ENCODE measurements at regions of chr9 and their contacts with region 1.

Region 1: DNA sequence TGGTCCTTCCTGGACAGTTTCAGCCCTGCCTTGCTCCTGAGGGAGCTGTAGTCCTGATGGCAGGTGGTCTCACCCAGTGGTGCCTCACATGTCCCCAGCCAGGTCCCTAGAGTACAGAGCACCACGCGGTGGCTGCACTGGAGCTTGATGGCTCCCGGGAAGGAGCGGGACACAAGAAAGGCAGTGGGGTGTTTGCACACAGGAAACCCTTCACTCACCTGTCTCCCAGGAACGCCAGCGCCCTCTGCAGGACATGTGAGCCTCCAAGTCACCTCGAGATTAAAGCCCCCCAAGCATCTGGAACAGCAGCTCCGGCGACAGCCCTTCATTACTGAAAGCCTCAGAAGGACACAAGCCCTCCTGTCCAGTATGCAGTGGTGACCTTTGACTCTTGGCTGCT is 19.9 kb upstream of the TMEM250 start:
- DNase-seq: peak; percentile 94
- ATAC-seq: peak; percentile 64
- H3K4me3 Mint-ChIP-seq: no peak overlapping the region; the same call in 1 of the 2 replicates
- H3K27ac Mint-ChIP-seq: peak overlapping the region; percentile 94; the same call in 1 of the 2 replicates
- H3K4me1 Mint-ChIP-seq: peaks cover 17% of the 10 kb centered on the region
- H3K27me3 Mint-ChIP-seq: peaks cover 10% of the 10 kb centered on the region
- CTCF ChIP-seq: peak; percentile 72

Region 2: GRCh38 chr9:135968083-135968476 is 170.5 kb before region 1 on chr9:
- CTCF ChIA-PET with region 1: interaction called, 28 read pairs
- POLR2A ChIA-PET with region 1: no interaction called
- DNase-seq: no peak
- ATAC-seq: no peak
- H3K4me3 Mint-ChIP-seq: no peak overlapping the region
- H3K27ac Mint-ChIP-seq: 0 out of 2 replicates have a peak overlapping the region, but pooled peaks have one; percentile 37
- H3K4me1 Mint-ChIP-seq: peaks cover 15% of the 10 kb centered on the region
- H3K27me3 Mint-ChIP-seq: no peaks in the 10 kb centered on the region
- CTCF ChIP-seq: no peak

Region 3: GRCh38 chr9:136122425-136123383 is 15.9 kb before region 1 on chr9:
- CTCF ChIA-PET with region 1: interaction called, 17 read pairs
- POLR2A ChIA-PET with region 1: no interaction called
- DNase-seq: peak; percentile 84
- ATAC-seq: peak; percentile 11
- H3K4me3 Mint-ChIP-seq: no peak overlapping the region
- H3K27ac Mint-ChIP-seq: no peak overlapping the region
- H3K4me1 Mint-ChIP-seq: no peaks in the 10 kb centered on the region
- H3K27me3 Mint-ChIP-seq: no peaks in the 10 kb centered on the region
- CTCF ChIP-seq: peak; percentile 83

Region 4: DNA sequence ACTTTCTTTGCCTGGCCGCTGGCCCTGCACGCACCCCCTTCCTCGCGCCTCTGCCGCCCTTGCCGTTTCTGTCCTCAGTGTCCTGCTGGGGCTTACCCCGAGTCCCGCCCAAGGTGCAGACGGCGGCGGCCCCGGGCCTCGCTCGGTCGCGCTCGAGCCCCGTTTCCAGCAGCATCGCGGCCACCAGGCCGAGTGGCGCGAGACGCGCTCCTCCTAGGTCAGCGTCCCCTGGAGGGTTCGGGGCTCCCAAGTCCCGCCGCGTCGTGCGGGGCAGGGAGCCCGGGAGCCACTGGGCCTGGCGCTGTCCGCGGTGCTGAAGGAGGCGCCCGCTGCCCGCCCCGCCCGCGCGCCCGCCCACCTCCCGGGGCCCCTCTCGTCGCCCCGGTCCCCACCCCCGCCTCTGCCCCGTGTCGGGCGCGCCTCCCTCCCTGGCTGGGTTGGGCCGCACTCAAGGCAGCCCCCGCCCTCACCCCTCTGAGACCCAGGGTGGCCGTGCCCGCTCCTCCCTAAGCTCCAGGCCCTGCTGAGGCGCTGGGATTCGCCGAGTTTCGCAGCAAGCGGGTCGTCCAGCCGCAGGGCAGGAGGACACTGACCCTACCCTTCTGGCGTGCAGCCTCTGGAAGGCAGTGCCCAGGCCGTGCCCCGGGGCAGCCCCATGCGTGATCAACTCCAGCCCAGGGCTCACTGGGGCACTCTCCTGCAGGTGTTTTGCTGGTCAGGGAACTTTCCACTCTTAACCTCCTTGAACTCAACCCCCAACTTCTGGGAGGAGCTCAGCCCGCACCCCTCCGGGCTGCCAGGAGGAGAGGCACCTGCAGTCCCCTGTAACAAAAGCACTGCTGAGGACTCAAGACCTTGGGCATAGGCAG is 66.5 kb after region 1 on chr9 and contains the start of gene LHX3:
- CTCF ChIA-PET with region 1: interaction called, 11 read pairs
- POLR2A ChIA-PET with region 1: no interaction called
- DNase-seq: peak; percentile 69
- ATAC-seq: peak; percentile 36
- H3K4me3 Mint-ChIP-seq: no peak within 1 kb of the TSS; the same call in 1 of the 2 replicates
- H3K27ac Mint-ChIP-seq: no peak within 1 kb of the TSS
- H3K4me1 Mint-ChIP-seq: no peaks in the 10 kb centered on the region
- H3K27me3 Mint-ChIP-seq: peaks cover 62% of the 10 kb centered on the region
- CTCF ChIP-seq: no peak
- total RNA-seq, gene LHX3: 0.11 TPM in 1 of 3 replicates, not detected in the others